Cardiac septum (tissue), 1 donor: ENCODE measurements at regions of chr3 and their contacts with region 1.

Region 1: GRCh38 chr3:193572426-193572908 is 17.8 kb upstream of the ATP13A4 start:
- DNase-seq: no peak

Region 2: DNA sequence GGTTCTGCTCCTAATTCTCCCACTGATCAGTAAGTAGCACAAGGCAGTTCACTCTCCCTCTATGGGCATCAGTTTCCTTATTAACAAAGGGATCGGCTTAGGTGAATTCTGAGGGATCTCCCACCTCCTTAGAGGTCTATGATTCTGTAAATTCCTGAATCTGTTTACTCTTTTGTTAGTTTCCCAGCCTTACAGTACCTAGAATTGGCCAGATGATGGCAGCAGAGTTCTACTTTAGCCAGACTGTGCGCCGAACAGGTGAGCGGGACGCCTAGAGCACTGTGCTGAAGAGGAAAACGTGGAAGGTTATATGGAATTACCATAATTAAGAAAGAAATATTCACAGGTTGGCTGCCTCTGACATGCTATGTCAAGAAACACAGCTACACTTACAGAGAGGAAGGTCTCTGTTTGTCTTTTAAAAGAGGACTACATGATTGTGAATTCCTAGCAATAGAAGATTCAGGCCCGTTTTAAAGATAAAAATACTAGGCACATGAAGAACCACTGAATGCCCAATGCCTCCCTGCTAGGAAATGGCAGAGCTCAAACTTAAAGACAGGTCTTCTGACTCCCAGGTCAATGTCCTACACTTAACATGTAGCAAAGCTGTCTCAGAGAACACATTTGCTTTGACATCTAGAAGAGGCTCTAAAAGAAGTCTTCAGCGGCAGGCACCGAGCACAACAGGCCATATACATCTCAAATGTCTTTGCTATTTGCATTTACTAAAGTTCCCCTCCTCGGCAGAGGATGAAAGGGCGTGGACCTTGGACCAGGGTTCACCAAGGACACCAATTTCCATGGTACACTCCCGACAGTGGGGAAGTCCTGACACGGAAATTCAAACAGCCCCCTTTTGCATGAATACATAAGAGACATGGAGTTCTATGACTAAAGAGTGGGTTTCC is 1105.0 kb before region 1 on chr3:
- intact Hi-C with region 1: loop called (anchors 5 kb)
- DNase-seq: peak; percentile 79

Region 3: DNA sequence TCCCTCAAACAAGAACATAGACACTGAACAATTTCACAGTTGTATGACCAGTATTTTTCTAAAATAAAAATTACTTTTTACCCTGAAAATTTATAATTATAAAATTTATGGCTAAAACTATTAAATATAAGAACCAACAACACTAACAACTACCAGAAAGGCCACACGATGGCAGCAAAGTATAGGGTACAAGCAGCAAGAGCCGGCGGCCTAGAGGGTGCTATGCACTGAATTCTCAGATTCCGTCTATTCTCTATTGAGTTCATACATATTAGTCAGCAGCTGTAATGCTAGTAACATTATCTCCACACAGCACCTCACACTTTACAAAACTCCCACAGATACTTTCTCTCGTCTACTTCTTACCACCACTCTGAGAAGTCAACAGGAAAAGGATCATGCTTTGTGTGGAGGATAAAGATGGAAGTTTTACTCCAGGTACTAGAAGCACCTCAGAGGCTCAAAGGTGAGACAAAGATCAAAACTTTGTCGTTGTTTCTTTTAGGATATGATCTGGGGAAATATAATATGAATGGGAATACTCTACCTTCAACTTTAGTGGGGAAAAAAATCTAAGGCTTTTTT is 1005.7 kb before region 1 on chr3:
- intact Hi-C with region 1: loop called (anchors 5 kb)
- DNase-seq: no peak

Region 4: GRCh38 chr3:192816351-192816750 is 756.1 kb before region 1 on chr3:
- intact Hi-C with region 1: loop called (anchors 2 kb)
- DNase-seq: no peak

Region 5: GRCh38 chr3:193040836-193041672 is 531.4 kb before region 1 on chr3:
- intact Hi-C with region 1: loop called (anchors 10 kb)
- DNase-seq: no peak

Region 6: GRCh38 chr3:193464889-193465288 is 107.6 kb before region 1 on chr3:
- intact Hi-C with region 1: loop called (anchors 5 kb)
- DNase-seq: no peak